OCI-LY7 (cell line): ENCODE measurements at regions of chr7 and their contacts with region 1.

Region 1: DNA sequence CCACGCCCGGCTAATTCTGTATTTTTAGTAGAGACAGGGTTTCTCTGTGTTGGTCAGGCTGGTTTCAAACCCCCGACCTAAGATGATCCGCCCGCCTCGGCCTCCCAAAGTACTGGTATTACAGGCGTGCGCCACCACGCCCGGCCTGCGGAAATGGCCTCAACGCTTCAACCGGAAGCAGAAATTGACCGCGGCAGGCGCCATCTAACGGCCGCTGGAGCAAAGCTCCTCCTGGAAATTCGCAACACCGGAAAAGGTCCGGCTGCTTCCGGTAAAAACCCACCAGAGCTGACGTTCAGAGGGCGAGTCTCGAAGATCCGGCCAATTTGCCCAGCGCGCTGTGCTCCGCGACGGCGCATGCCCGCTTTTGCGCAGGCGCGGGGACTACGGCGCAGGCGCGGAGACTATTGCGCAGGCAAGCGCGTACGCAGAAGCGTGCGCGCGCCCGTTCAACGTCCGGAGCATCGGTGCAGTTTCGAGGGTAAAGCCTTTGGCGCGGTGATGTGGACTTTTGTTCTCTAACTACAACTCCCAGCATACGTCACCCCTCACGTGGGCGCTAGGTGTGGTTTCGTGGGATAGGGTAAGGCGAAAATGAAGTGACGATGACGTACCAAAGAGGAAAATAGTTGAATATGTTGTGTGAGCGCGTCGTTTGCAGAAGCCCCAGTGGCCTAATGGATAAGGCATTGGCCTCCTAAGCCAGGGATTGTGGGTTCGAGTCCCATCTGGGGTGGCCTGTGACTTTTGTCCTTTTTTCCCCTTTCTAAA is 915 bp upstream of the FMC1 start:
- DNase-seq: peak; percentile 99
- H3K4me3 ChIP-seq: peak overlapping the region; percentile 90
- H3K27ac ChIP-seq: peak overlapping the region; percentile 94
- H3K4me1 ChIP-seq: peaks cover 15% of the 10 kb centered on the region
- CTCF ChIP-seq: peak; percentile 81

Region 2: DNA sequence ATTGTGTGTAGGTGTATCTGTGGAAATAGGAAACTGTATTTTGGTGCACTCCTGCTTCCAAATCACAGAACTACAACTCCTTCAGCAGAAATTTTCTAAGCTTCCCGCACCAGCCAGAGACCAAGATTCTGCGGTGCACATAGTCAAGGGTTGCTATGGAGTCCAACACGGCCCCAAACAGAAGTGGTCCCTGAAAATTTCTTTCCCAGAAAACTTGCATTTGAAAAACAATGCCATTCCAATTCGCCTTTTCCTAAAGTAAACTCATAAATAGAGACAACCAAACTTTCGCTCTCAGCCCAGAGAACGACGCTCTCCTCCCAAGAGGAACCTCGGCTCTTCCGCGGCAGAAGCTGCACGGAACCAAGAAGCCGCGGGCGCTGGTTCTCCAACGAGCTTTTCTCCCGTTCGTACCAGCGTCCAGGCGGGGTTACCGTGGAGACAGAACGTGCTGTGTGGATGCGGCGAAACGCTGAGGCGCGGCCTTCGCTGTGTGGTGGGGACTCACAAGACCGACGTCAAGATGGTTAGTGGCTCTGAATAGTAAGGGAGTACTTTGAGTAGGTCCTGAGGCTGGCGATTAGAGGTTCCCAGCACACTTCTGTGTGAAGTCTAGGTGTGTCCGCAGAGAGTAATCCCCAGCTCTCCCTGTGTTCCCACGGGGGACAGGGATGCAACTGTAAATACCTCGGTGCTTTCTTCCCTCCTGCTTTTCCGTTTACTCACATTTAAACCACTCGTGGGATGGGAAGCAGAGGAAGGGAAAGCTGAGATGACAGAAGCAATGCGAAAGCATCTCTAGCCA is 206.7 kb before region 1 on chr7:
- CTCF ChIA-PET with region 1: no interaction called
- POLR2A ChIA-PET with region 1: no interaction called
- intact Hi-C with region 1: loop called (anchors 1 kb)
- DNase-seq: peak; percentile 51
- H3K4me3 ChIP-seq: peak overlapping the region; percentile 58
- H3K27ac ChIP-seq: no peak overlapping the region
- H3K4me1 ChIP-seq: no peaks in the 10 kb centered on the region
- CTCF ChIP-seq: no peak

Region 3: GRCh38 chr7:139230774-139231512 is 109.3 kb before region 1 on chr7 and contains the start of gene UBN2:
- CTCF ChIA-PET with region 1: no interaction called
- POLR2A ChIA-PET with region 1: interaction called, 3 read pairs
- intact Hi-C with region 1: loop called (anchors 1 kb)
- DNase-seq: peak; percentile 96
- H3K4me3 ChIP-seq: peak within 1 kb of the TSS; percentile 97
- H3K27ac ChIP-seq: peak within 1 kb of the TSS; percentile 63
- H3K4me1 ChIP-seq: peaks cover 14% of the 10 kb centered on the region
- CTCF ChIP-seq: no peak
- total RNA-seq, gene UBN2: 7.2 and 8.0 TPM in 2 replicates

Region 4: GRCh38 chr7:139328375-139328774 is 11.8 kb before region 1 on chr7:
- CTCF ChIA-PET with region 1: no interaction called
- POLR2A ChIA-PET with region 1: interaction called, 11 read pairs
- intact Hi-C with region 1: no loop called
- DNase-seq: no peak
- H3K4me3 ChIP-seq: no peak overlapping the region
- H3K27ac ChIP-seq: no peak overlapping the region
- H3K4me1 ChIP-seq: peaks cover 5% of the 10 kb centered on the region
- CTCF ChIP-seq: no peak

Region 5: DNA sequence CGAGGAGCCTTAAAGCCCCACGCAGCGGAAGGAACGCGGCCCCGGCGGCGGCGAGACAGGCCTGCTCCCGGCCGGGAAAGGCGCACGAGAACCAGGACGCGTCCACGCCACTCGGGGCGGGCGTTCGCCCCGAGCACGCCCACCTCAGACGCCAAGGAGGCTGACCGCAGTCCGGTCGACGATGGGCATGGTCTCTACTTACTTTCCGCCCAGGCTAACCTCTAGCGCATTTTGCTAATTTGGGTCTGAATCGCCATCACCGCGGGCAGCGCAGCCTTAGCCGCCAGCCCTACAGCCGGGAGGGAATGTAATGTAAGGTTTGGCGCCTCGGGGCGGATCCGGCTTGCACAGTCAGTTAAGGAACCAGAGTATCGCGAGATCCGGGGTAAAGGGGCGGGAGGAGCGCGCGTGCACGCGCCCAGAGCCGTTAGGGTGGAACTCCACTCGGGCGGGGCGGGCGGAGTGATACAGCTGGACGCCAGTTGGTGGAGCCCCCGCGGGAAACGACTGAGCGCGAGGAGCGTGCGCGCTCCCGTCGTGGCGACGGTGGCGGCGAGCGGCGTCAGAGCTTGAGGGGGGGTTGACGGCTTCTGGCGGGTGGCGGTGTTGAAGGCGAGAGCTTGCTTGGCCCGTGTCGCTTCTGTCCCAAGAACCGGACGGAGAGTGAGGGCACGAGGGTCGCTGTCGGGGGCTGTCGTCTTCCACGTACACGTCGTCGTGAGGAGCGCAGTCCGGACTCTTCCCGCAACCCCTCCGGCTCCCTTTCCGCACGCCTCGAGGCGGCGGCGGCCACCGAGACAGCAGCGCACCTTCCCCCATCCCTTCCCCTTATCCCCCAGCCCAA is 19.4 kb after region 1 on chr7 and contains the start of gene LUC7L2:
- CTCF ChIA-PET with region 1: no interaction called
- POLR2A ChIA-PET with region 1: interaction called, 8 read pairs
- intact Hi-C with region 1: loop called (anchors 1 kb)
- DNase-seq: peak; percentile 99
- H3K4me3 ChIP-seq: peak within 1 kb of the TSS; percentile 90
- H3K27ac ChIP-seq: peak within 1 kb of the TSS; percentile 93
- H3K4me1 ChIP-seq: peaks cover 30% of the 10 kb centered on the region
- CTCF ChIP-seq: 0 out of 2 replicates have a peak, but pooled peaks have one; percentile 26
- total RNA-seq, gene LUC7L2: 79.6 and 94.9 TPM in 2 replicates